CD14-positive monocyte (primary cell): ENCODE measurements at regions of chr12 and their contacts with region 1.

Region 1: DNA sequence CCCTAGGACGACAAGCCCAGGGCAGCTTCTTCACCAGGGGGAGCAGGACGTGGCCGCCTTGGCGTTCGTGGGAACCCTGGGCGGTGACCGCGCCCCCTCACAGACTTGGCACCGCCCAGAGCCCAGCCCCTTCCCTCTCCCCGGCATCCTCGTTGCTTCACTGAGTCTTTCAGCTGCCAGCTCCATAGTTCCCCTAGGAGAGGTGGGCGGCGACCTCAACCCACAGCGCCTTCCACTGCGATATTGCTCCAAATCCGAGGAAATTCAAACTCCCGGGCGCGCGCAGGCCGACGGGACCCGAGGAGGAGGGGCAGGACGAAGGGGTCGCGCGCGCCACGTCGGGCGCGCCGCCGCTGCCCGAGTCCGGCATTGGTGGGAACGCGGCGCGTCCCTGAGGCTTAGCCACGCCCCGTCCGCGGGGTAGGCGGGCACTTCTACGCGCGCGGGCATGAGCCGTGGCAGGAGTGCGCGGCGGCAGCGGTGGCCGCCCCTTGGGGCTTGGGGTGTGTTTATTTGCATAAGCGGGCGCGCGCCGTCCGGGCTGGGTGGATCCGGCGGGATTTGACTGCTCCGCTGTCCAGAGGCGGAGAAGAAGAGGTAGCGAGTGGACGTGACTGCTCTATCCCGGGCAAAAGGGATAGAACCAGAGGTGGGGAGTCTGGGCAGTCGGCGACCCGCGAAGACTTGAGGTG is at the starts of genes APAF1 and IKBIP:
- DNase-seq: peak; percentile 92 to 96 (median 94)
- H3K4me3 ChIP-seq: peak within 1 kb of the TSS; percentile 87 to 100 (median 99)
- H3K4me3 Mint-ChIP-seq: peak within 1 kb of the TSS; percentile 97 to 99
- H3K27ac ChIP-seq: peak within 1 kb of the TSS; percentile 71 to 91
- H3K27ac Mint-ChIP-seq: peak within 1 kb of the TSS; percentile 90 to 96 (median 95)
- H3K4me1 ChIP-seq: peaks cover 47 to 58% of the 10 kb centered on the region in 2 donors
- H3K4me1 Mint-ChIP-seq: peaks cover 64% of the 10 kb centered on the region
- H3K27me3 ChIP-seq: no peaks in the 10 kb centered on the region
- H3K27me3 Mint-ChIP-seq: no peaks in the 10 kb centered on the region
- CTCF ChIP-seq: no peak
- polyA plus RNA-seq, gene APAF1: 29.5 to 36.7 (median 30.0) TPM
- polyA plus RNA-seq, gene IKBIP: 4.6 to 22.1 (median 18.4) TPM

Region 2: DNA sequence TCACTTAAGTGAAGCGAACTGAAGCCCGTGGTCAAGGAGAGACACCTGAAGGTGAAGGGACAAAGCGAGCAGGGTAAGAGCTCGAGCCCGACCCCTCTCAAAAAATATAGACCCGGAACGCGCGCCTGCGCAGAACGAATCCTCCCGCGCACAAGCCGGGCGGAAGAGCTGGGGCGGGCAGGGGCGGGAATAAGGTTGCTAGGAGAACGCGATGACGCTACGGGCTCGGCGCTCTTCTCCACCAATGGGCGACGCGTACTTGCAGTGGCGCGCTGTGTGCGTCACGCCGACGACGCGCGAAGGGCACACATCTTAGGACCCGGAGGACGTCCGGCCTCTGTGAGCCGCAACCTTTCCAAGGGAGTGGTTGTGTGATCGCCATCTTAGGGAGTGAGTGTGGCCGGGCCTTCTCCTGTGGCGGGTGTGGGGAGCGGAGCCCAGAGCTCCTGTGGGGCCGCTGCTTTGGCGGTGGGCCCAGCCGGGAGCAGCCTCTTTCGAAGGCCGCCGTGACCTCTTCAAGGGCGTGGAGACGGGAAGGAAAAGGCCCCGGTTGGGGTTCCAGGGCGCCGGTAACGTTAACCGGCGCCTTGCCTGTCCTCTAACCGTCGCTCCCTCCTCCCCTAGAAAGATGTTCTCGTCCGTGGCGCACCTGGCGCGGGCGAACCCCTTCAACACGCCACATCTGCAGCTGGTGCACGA is 51.4 kb before region 1 on chr12 and contains the start of gene SLC25A3:
- intact Hi-C with region 1: loop called (anchors 2 to 5 kb)
- DNase-seq: peak; percentile 98 to 99 (median 98)
- H3K4me3 ChIP-seq: peak within 1 kb of the TSS; percentile 87 to 93 (median 87)
- H3K4me3 Mint-ChIP-seq: peak within 1 kb of the TSS; percentile 90 to 97
- H3K27ac ChIP-seq: peak within 1 kb of the TSS; percentile 92 to 95
- H3K27ac Mint-ChIP-seq: peak within 1 kb of the TSS; percentile 95 to 99 (median 97)
- H3K4me1 ChIP-seq: peaks cover 18 to 27% of the 10 kb centered on the region in 2 donors
- H3K4me1 Mint-ChIP-seq: peaks cover 24% of the 10 kb centered on the region
- H3K27me3 ChIP-seq: no peaks in the 10 kb centered on the region
- H3K27me3 Mint-ChIP-seq: peaks cover 2% of the 10 kb centered on the region in 3 donors
- CTCF ChIP-seq: no peak
- polyA plus RNA-seq, gene SLC25A3: 325 to 453 (median 342) TPM

Region 3: DNA sequence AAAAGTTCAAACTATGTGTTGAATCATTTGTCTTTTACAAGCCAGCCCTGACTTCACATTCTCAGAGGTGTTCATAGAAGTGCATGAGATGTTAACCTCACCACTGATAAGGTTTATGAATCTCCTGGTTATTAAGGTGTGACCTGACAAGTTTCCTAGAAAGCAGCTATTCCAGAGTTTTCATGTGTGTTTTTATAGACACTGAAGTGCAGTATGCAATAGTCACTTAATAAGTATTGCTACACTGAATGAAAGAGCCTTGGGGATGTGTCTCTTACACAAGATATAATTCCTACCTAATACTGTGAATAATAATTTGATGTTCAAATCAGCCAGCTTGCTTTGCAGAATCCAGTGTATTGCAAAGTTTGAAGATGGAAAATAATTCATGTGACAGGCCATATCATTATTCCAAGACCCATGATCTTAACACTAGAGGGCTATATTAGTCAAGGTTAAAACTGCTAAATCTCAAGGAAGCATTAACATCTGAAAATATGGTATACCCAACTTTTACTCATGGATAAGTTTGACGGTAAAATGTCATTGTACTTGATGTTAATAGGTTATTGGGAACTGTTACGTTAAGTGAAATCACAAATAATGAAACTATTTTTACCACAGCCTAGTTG is 38.4 kb before region 1 on chr12:
- intact Hi-C with region 1: loop called (anchors 5 kb)
- DNase-seq: peak in 1 of 3 donors; percentile 32
- H3K4me3 ChIP-seq: peak overlapping the region in 2 of 3 experiments; percentile 42 to 77
- H3K4me3 Mint-ChIP-seq: peak overlapping the region; percentile 82 to 95
- H3K27ac ChIP-seq: peak overlapping the region; percentile 86 to 91
- H3K27ac Mint-ChIP-seq: peak overlapping the region in 6 of 7 donors; percentile 95 to 98 (median 96)
- H3K4me1 ChIP-seq: peaks cover 11 to 31% of the 10 kb centered on the region in 2 donors
- H3K4me1 Mint-ChIP-seq: peaks cover 28% of the 10 kb centered on the region
- H3K27me3 ChIP-seq: no peaks in the 10 kb centered on the region
- H3K27me3 Mint-ChIP-seq: no peaks in the 10 kb centered on the region
- CTCF ChIP-seq: peak; percentile 27